ENCODE measurements at regions of chr9 and their contacts with region 1.

Region 1: GRCh38 chr9:136944519-136945279 is at the starts of genes C8G and FBXW5:
- DNase-seq: peak; percentile 87 to 98 (median 93)
- ATAC-seq: peak; percentile 87
- H3K4me3 ChIP-seq: peak within 1 kb of the TSS; percentile 63 to 79
- H3K4me3 Mint-ChIP-seq: peak within 1 kb of the TSS; percentile 82
- H3K27ac ChIP-seq: peak within 1 kb of the TSS; percentile 28 to 48
- H3K27ac Mint-ChIP-seq: peak within 1 kb of the TSS; percentile 62
- H3K4me1 ChIP-seq: peaks cover 16% of the 10 kb centered on the region
- H3K4me1 Mint-ChIP-seq: peaks cover 12% of the 10 kb centered on the region
- H3K27me3 ChIP-seq: no peaks in the 10 kb centered on the region
- H3K27me3 Mint-ChIP-seq: no peaks in the 10 kb centered on the region
- CTCF ChIP-seq: peak; percentile 96
- total RNA-seq, gene C8G: not detected
- total RNA-seq, gene FBXW5: 38.4 to 39.5 TPM

Region 2: GRCh38 chr9:136865735-136866103 is 79.0 kb before region 1 on chr9:
- CTCF ChIA-PET with region 1: no interaction called
- POLR2A ChIA-PET with region 1: no interaction called
- intact Hi-C with region 1: loop called in 1 of 2 experiments (anchors 1 kb)
- DNase-seq: peak in 1 of 9 experiments; percentile 29
- ATAC-seq: peak; percentile 16
- H3K4me3 ChIP-seq: peak overlapping the region; percentile 64 to 78
- H3K4me3 Mint-ChIP-seq: peak overlapping the region; percentile 87
- H3K27ac ChIP-seq: peak overlapping the region; percentile 59 to 80
- H3K27ac Mint-ChIP-seq: peak overlapping the region; percentile 66
- H3K4me1 ChIP-seq: peaks cover 16% of the 10 kb centered on the region
- H3K4me1 Mint-ChIP-seq: peaks cover 23% of the 10 kb centered on the region
- H3K27me3 ChIP-seq: no peaks in the 10 kb centered on the region
- H3K27me3 Mint-ChIP-seq: no peaks in the 10 kb centered on the region
- CTCF ChIP-seq: no peak

Region 3: DNA sequence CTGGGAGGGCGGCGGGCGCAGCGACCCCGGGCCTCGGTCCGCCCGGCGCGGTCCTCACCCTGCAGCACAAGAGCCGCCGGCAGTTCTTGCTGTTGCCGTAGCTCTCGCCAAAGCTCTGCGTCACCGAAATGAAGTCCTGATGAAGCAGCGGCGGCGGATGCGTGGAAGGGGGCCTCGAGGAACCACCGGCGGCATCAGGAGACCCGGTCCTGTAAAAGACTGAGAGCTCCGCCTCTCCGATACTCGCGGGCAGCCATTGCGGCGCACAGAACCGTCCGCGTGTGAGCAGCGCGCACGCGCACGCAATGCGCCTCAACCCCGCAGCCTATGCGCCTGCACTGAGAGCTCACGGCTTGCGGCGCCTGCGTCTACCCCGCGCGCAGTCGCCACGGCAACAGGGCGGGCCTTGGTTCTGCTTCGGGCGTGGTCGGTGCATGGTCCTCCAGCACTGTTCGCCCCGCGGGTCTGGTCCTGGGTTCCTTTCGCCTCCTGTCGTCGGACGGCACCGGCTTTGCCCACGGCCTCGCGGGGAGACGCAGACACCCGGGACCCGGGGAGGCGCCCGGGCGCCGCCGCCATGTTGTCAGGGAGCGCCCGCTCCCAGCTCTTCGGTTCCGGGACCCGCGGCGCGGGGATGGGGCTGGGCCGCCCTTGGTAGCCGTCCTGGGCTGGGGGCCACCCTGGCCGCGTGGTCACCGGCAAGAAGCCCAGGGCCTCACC is 184.9 kb after region 1 on chr9:
- CTCF ChIA-PET with region 1: no interaction called
- POLR2A ChIA-PET with region 1: no interaction called
- intact Hi-C with region 1: no loop called
- DNase-seq: peak; percentile 71 to 96 (median 88)
- ATAC-seq: peak; percentile 92
- H3K4me3 ChIP-seq: peak overlapping the region; percentile 70 to 83
- H3K4me3 Mint-ChIP-seq: peak overlapping the region; percentile 87
- H3K27ac ChIP-seq: peak overlapping the region; percentile 62 to 78
- H3K27ac Mint-ChIP-seq: peak overlapping the region; percentile 91
- H3K4me1 ChIP-seq: peaks cover 35% of the 10 kb centered on the region
- H3K4me1 Mint-ChIP-seq: peaks cover 28% of the 10 kb centered on the region
- H3K27me3 ChIP-seq: peaks cover 0 to 17% of the 10 kb centered on the region in 2 experiments
- H3K27me3 Mint-ChIP-seq: peaks cover 9% of the 10 kb centered on the region
- CTCF ChIP-seq: no peak

Measured in CD8-positive, alpha-beta T cell (primary cell).